GM10248 (cell line): ENCODE measurements at regions of chr2 and their contacts with region 1.

Region 1: DNA sequence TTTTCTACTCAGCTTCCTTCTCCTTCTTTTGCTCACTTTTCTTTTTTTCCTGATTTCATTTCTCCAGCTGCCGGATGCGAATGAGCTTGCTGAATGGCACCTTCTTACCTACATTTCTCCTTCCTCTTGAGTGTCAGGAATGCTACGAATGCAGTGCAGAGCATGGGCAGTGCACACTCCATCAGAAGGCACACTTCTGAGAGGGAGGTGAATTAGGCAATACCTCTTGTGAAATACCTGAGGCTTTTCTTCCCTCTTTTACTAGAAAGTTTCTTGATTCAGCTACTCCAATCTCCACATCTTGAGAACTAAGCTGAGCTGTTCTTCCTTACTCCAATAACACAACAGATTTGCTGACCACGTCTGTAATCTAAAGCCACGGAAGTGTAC is 51.1 kb downstream of the PLEKHM3 start:
- DNase-seq: no peak
- CTCF ChIP-seq: no peak

Region 2: DNA sequence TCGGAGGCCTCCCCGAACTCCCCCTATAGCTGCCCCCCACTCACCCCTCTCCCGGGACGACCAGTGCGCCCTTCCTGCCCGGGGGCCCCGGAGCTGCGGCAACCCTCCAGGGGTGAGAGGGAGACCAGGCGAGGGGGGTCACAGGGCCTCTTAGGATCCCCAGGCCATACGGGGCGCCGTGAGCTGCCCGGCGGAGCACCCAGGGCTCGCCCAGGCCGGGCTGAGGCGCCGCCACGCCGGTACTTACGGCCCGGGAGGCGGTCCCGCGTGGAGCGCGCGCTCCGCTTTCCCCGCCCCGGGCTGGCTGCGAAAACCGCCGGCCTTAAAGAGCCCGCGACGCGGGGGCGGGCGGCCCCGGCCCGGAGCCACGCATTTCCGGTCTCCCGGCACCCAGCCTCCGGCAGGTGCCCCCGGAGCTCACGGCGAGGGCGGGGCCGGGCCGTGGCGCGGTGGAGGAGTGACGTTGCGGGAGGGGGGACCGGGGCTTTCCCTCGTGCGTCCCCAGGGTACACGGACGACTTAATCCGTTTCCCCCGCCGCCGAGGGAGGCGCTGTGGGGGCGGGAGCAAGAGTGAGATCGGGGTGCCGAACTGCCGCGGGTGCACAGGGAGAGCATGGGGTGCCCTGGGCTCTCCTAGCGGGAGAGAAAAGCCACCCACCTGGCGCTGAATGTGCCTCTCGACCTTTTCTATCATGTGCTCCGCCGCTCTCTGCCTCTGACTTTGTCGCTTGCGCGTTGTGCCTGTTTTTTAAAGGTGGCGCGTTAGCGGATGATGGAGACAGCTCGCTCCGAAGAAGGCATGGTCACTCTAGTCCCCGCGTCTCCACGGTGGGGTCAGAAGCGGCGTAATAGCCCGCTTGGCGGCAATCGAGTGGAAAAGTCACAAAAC is 348.9 kb before region 1 on chr2 and contains the start of gene METTL21A:
- CTCF ChIA-PET with region 1: interaction called, 10 read pairs
- POLR2A ChIA-PET with region 1: no interaction called
- DNase-seq: peak; percentile 97
- CTCF ChIP-seq: peak; percentile 64

Region 3: GRCh38 chr2:207952564-207953345 is 21.5 kb before region 1 on chr2:
- CTCF ChIA-PET with region 1: interaction called, 42 read pairs
- POLR2A ChIA-PET with region 1: no interaction called
- DNase-seq: no peak
- CTCF ChIP-seq: no peak

Region 4: GRCh38 chr2:207960090-207960489 is 14.1 kb before region 1 on chr2:
- CTCF ChIA-PET with region 1: interaction called, 42 read pairs
- POLR2A ChIA-PET with region 1: no interaction called
- DNase-seq: no peak
- CTCF ChIP-seq: no peak

Region 5: DNA sequence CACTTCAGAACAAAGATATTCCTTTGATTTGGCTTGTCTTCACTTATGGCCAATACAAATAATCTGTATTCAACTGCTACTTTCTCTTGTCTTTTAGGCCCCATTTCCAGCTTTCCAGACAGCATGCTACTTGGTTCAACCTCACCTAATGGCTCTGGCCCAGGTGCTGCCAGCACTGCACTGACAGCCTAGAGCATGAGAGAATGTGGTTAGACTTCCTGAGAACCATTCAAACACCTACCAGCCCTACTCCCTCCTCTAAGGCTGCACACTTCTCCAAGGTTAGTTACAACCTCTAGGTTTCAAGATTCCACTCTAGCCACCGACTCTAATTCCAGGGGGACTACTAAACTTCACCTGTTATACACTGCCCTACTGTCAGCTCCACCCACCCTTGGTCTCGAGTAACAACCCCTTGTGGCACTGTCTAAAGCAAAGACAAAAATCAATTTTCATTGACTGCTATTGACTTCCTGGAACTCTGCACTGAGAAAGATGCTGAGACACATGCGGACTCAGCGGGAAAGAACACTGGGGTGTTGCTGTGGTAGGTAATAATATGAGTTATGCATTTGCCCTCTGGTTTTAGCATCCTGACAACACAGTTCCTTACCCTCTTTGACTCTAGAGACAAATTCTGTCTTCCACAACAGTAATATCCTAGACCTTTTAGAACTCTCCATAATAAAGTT is 13.0 kb after region 1 on chr2:
- CTCF ChIA-PET with region 1: interaction called, 40 read pairs
- POLR2A ChIA-PET with region 1: no interaction called
- DNase-seq: no peak
- CTCF ChIP-seq: no peak

Region 6: GRCh38 chr2:208648368-208648767 is 674.2 kb after region 1 on chr2:
- CTCF ChIA-PET with region 1: no interaction called
- POLR2A ChIA-PET with region 1: no interaction called
- DNase-seq: no peak
- CTCF ChIP-seq: no peak